Esophagus squamous epithelium (tissue), 5 donors: ENCODE measurements at regions of chr14 and their contacts with region 1.

Region 1: GRCh38 chr14:80850197-80850814 is 91.2 kb downstream of the CEP128 start:
- DNase-seq: no peak
- H3K4me3 ChIP-seq: no peak overlapping the region
- H3K27ac ChIP-seq: no peak overlapping the region
- H3K4me1 ChIP-seq: no peaks in the 10 kb centered on the region
- H3K27me3 ChIP-seq: no peaks in the 10 kb centered on the region
- CTCF ChIP-seq: peak in 5 of 6 experiments; percentile 35 to 72 (median 52)
- POLR2A ChIP-seq: no peak

Region 2: GRCh38 chr14:80055667-80056496 is 794.4 kb before region 1 on chr14:
- intact Hi-C with region 1: loop called (anchors 10 kb)
- DNase-seq: no peak
- H3K4me3 ChIP-seq: no peak overlapping the region
- H3K27ac ChIP-seq: no peak overlapping the region
- H3K4me1 ChIP-seq: peaks cover 0 to 6% (median 0%) of the 10 kb centered on the region in 3 donors
- H3K27me3 ChIP-seq: no peaks in the 10 kb centered on the region
- CTCF ChIP-seq: peak in 5 of 6 experiments; percentile 57 to 78 (median 71)
- POLR2A ChIP-seq: no peak